ENCODE measurements at regions of chr5 and their contacts with region 1.

Region 1: DNA sequence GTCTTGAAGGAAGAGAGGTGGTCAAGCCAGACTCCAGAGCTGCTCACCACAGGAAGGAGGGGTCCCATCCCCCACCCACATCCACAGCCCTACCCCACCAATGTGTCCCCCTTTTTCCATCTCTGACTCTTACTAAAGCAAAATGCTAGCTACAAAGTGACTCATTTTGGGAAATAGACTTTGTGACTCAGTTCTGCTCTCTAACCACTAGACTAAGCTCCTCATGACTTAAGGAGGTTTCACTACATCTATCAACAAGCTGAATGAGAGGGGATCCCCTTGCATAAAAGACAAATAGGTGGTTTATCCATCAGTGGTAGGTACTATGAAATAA is 35.1 kb upstream of the ADRB2 start:
- DNase-seq: peak; percentile 60
- H3K4me3 Mint-ChIP-seq: no peak overlapping the region
- H3K27ac Mint-ChIP-seq: no peak overlapping the region
- H3K4me1 Mint-ChIP-seq: peaks cover 18% of the 10 kb centered on the region
- H3K27me3 Mint-ChIP-seq: peaks cover 34% of the 10 kb centered on the region

Region 2: DNA sequence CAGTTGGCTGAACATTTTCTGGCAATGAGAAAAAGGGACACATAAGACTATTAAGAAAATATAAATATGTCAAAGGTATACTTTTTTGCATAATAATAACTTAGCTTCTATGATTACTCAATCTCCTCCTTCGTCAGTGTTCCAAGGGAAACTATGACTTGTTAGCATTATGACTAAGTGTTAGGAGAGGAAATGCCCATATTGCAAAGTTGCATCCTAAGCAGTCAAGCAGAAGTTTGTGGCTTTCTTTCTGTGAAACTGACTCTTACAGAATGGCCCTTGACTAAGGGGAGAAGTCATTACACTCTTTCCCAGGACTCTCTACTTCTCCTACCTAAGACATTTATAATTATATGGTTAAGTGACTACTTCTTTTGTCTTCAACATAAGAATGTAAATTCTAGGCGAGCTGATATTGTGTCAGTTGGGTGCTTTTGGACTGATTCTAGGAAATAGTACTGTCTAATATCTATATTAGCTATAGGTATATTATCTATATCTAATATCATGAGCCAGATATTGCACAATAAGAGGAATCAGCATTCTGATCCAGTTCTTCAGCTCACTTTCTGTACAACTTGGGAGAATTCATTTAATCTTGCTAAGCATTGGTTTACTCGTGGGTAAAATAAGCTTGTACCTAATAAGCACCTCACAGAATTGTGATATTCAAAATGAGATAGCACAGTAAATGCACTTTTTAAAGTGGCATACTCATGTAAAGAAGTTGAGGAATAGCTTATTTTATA is 604.9 kb before region 1 on chr5:
- CTCF ChIA-PET with region 1: no interaction called
- intact Hi-C with region 1: loop called (anchors 1 kb)
- DNase-seq: peak; percentile 9
- H3K4me3 Mint-ChIP-seq: no peak overlapping the region
- H3K27ac Mint-ChIP-seq: no peak overlapping the region
- H3K4me1 Mint-ChIP-seq: peaks cover 2% of the 10 kb centered on the region
- H3K27me3 Mint-ChIP-seq: peaks cover 10% of the 10 kb centered on the region

Region 3: DNA sequence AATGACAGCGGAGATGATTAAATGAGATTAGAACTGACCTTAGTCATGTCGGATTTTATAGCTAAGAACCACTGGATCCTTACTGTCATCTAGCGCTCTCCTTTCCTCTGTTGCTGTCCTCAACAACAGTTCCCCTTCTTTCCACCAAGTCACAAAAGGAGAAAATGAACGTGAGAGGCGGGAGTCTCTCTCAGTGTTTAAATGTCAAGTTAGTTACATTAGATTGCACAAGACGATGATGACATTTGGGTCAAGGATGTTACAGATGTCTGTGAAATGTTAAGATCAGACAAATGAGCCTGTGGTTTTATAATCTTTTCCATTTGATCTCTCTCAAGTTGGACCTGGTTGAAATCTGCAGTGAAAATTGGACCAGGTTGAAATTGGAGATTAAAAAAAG is 354.1 kb before region 1 on chr5:
- CTCF ChIA-PET with region 1: no interaction called
- intact Hi-C with region 1: no loop called
- DNase-seq: no peak
- H3K4me3 Mint-ChIP-seq: peak overlapping the region; percentile 37
- H3K27ac Mint-ChIP-seq: peak overlapping the region; percentile 80
- H3K4me1 Mint-ChIP-seq: peaks cover 5% of the 10 kb centered on the region
- H3K27me3 Mint-ChIP-seq: no peaks in the 10 kb centered on the region

Region 4: GRCh38 chr5:148708854-148709253 is 82.4 kb before region 1 on chr5:
- CTCF ChIA-PET with region 1: no interaction called
- intact Hi-C with region 1: loop called (anchors 1 kb)
- DNase-seq: peak; percentile 33
- H3K4me3 Mint-ChIP-seq: no peak overlapping the region
- H3K27ac Mint-ChIP-seq: no peak overlapping the region
- H3K4me1 Mint-ChIP-seq: peaks cover 13% of the 10 kb centered on the region
- H3K27me3 Mint-ChIP-seq: peaks cover 19% of the 10 kb centered on the region

Region 5: GRCh38 chr5:148740966-148741742 is 50.1 kb before region 1 on chr5:
- CTCF ChIA-PET with region 1: interaction called, 3 read pairs
- intact Hi-C with region 1: loop called (anchors 2 kb)
- DNase-seq: no peak
- H3K4me3 Mint-ChIP-seq: no peak overlapping the region
- H3K27ac Mint-ChIP-seq: no peak overlapping the region
- H3K4me1 Mint-ChIP-seq: no peaks in the 10 kb centered on the region
- H3K27me3 Mint-ChIP-seq: peaks cover 28% of the 10 kb centered on the region

Region 6: DNA sequence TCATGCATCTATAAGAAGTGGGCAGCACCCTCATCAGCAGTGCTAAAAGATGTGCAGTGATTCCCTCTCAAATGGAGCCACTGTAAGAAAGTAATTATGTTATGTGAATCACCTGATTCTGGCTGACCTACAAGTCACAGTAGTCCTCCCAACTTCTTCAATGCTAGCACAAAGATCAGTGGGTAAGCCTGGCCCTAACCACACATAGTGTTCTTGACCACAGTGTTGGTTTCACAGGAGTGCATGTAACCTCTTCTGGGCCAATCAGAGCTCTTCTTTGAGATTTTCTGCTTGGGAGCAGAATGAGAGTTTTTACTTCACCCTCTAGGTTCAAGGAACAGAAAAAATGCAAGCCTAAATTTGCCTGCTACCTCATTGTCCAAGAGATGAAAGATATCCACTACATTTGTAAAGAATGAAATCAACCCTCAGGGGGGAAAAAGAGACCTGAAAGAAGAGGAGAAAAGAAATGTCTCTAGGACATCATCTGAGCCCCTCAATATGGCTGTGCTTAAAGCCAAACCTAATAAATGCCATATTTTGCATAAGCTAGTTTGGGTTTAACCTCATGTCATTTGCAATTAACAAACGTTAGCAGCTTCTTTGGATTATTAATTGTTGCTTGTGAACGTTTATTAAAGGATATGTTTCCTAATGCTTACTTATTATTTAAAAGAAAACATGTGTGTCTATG is 30.2 kb before region 1 on chr5:
- CTCF ChIA-PET with region 1: no interaction called
- intact Hi-C with region 1: loop called (anchors 1 kb)
- DNase-seq: no peak
- H3K4me3 Mint-ChIP-seq: no peak overlapping the region
- H3K27ac Mint-ChIP-seq: no peak overlapping the region
- H3K4me1 Mint-ChIP-seq: no peaks in the 10 kb centered on the region
- H3K27me3 Mint-ChIP-seq: peaks cover 15% of the 10 kb centered on the region

Region 7: GRCh38 chr5:148774313-148774712 is 17.0 kb before region 1 on chr5:
- CTCF ChIA-PET with region 1: no interaction called
- intact Hi-C with region 1: no loop called
- DNase-seq: no peak
- H3K4me3 Mint-ChIP-seq: no peak overlapping the region
- H3K27ac Mint-ChIP-seq: no peak overlapping the region
- H3K4me1 Mint-ChIP-seq: no peaks in the 10 kb centered on the region
- H3K27me3 Mint-ChIP-seq: peaks cover 22% of the 10 kb centered on the region

Region 8: DNA sequence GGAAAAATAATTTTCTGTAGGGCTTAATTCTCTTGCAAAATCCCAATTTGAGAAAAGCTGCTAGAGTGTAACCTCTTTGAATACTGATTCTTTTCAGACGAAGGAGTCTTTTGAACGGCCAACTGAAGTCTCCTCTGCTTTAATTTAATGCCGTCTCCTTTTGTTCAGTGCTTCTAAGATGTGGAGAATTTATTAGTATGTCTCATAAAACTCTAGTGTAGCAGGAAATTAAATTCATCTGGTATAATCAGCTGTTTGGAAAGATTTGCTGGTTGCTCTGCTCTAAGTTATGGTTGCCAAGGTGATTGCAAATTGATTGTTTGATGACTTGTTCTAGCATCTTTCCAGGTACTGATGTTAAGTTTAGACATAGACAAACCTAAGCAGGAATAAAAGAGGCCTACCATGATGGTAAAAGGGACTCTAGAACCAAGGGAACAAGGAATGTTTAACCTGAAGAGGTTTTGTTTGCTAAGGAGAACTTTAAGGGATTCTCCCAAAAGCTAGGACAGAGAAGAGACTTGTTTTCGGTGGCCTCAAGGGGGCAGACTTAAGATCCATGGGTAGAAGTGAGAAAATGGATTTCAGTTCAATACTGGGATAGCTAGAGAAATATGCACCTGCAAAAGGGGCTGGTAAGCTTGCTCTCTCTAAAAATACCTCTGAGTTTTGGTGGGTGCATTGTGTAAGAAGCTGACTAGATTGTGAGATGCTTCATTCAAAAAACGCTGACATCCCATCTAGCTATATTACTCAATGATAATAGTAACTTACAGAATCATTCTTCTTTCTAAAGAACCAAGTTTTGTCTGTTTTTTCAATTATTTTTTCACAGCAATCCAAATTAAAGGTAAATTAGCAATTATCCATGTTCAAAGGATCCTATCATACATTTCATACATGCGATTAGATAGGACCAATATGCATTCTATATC is 29.4 kb after region 1 on chr5:
- CTCF ChIA-PET with region 1: interaction called, 11 read pairs
- intact Hi-C with region 1: no loop called
- DNase-seq: no peak
- H3K4me3 Mint-ChIP-seq: no peak overlapping the region
- H3K27ac Mint-ChIP-seq: no peak overlapping the region
- H3K4me1 Mint-ChIP-seq: peaks cover 5% of the 10 kb centered on the region
- H3K27me3 Mint-ChIP-seq: peaks cover 18% of the 10 kb centered on the region

Region 9: DNA sequence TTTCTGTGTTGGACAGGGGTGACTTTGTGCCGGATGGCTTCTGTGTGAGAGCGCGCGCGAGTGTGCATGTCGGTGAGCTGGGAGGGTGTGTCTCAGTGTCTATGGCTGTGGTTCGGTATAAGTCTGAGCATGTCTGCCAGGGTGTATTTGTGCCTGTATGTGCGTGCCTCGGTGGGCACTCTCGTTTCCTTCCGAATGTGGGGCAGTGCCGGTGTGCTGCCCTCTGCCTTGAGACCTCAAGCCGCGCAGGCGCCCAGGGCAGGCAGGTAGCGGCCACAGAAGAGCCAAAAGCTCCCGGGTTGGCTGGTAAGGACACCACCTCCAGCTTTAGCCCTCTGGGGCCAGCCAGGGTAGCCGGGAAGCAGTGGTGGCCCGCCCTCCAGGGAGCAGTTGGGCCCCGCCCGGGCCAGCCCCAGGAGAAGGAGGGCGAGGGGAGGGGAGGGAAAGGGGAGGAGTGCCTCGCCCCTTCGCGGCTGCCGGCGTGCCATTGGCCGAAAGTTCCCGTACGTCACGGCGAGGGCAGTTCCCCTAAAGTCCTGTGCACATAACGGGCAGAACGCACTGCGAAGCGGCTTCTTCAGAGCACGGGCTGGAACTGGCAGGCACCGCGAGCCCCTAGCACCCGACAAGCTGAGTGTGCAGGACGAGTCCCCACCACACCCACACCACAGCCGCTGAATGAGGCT is 34.9 kb after region 1 on chr5 and contains the start of gene ADRB2:
- CTCF ChIA-PET with region 1: interaction called, 11 read pairs
- intact Hi-C with region 1: loop called (anchors 1 kb)
- DNase-seq: peak; percentile 90
- H3K4me3 Mint-ChIP-seq: peak within 1 kb of the TSS; percentile 78
- H3K27ac Mint-ChIP-seq: peak within 1 kb of the TSS; percentile 10
- H3K4me1 Mint-ChIP-seq: peaks cover 15% of the 10 kb centered on the region
- H3K27me3 Mint-ChIP-seq: peaks cover 23% of the 10 kb centered on the region
- total RNA-seq, gene ADRB2: 0.21 to 0.32 TPM

Region 10: GRCh38 chr5:149632311-149633251 is 841.3 kb after region 1 on chr5:
- CTCF ChIA-PET with region 1: no interaction called
- intact Hi-C with region 1: no loop called
- DNase-seq: peak; percentile 23
- H3K4me3 Mint-ChIP-seq: no peak overlapping the region
- H3K27ac Mint-ChIP-seq: no peak overlapping the region
- H3K4me1 Mint-ChIP-seq: peaks cover 13% of the 10 kb centered on the region
- H3K27me3 Mint-ChIP-seq: no peaks in the 10 kb centered on the region

Region 11: GRCh38 chr5:150449517-150450339 is 1658.4 kb after region 1 on chr5 and contains the start of gene RPS14:
- CTCF ChIA-PET with region 1: no interaction called
- intact Hi-C with region 1: no loop called
- DNase-seq: peak; percentile 97
- H3K4me3 Mint-ChIP-seq: peak within 1 kb of the TSS; percentile 93
- H3K27ac Mint-ChIP-seq: peak within 1 kb of the TSS; percentile 99
- H3K4me1 Mint-ChIP-seq: peaks cover 33% of the 10 kb centered on the region
- H3K27me3 Mint-ChIP-seq: no peaks in the 10 kb centered on the region
- total RNA-seq, gene RPS14: 4,594 to 4,738 TPM

Measured in activated naive CD4-positive, alpha-beta T cell treated with anti-CD3 and anti-CD28 coated beads for 36 hours (primary cell).